Heart left ventricle (tissue), 16 donors: ENCODE measurements at regions of chr11 and their contacts with region 1.

Region 1: DNA sequence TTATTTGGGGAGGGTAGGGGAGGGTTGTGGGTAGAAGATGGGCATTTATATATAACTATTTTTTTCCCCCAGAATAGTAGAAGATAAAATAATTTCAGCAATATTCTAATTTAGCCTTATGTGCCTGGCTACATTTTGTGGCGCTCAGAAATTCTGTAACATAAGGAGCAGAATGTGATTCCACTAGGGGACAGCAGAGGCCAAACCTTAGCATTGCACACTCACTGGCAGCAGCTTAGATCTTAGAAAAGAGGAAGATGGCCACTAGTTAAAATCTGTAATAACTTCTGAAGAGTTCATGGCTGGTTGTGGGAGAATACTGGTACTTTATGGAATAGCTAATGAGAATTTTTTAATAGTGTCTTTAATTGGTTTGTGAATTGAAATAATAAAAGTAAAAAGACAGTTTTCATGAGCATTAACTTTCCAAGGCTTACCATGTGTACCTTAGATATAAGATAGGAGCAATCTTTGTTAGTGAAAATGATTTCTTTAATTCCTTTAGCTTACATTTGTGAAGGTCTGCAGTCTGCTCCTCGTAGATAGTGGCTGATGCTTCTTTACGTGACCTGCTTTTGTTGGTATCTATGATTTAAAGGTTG is 33.1 kb downstream of the DDX10 start:
- DNase-seq: peak in 4 of 5 donors; percentile 39 to 53 (median 46)
- ATAC-seq: peak in 3 of 4 donors; percentile 82 to 88 (median 88)
- H3K4me3 ChIP-seq: no peak overlapping the region
- H3K27ac ChIP-seq: no peak overlapping the region
- H3K4me1 ChIP-seq: peaks cover 0 to 3% (median 0%) of the 10 kb centered on the region in 12 donors
- H3K27me3 ChIP-seq: no peaks in the 10 kb centered on the region
- CTCF ChIP-seq: peak; percentile 75 to 93 (median 86)
- POLR2A ChIP-seq: no peak

Region 2: DNA sequence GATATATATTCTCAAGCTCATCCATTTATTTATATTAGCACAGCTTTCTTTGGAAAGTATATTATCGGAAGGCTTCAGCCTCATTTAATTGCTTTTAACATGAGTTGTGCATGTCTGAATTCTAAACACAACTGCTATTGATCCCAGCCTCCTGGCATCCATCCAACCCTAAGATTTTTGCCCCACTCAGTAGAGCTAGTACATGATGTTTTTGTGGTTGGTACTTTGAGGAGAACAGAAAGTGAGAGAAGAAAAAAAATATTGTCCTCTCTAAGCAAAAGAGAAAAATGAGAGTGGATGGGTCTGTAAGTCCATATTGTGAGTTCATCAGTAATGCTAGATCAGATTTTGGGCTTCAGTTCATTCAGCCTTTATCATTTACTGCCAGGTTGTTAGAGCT is 165.6 kb after region 1 on chr11:
- intact Hi-C with region 1: loop called in 2 of 10 experiments (anchors 5 to 10 kb)
- DNase-seq: no peak
- ATAC-seq: no peak
- H3K4me3 ChIP-seq: no peak overlapping the region
- H3K27ac ChIP-seq: no peak overlapping the region
- H3K4me1 ChIP-seq: no peaks in the 10 kb centered on the region
- H3K27me3 ChIP-seq: no peaks in the 10 kb centered on the region
- CTCF ChIP-seq: no peak
- POLR2A ChIP-seq: no peak

Region 3: GRCh38 chr11:108871152-108871551 is 173.2 kb after region 1 on chr11:
- intact Hi-C with region 1: loop called (anchors 2 to 10 kb)
- DNase-seq: peak in 3 of 5 donors; percentile 20 to 42 (median 25)
- ATAC-seq: peak in 2 of 4 donors; percentile 18 to 63
- H3K4me3 ChIP-seq: no peak overlapping the region
- H3K27ac ChIP-seq: no peak overlapping the region
- H3K4me1 ChIP-seq: peaks cover 0 to 15% (median 2%) of the 10 kb centered on the region in 12 donors
- H3K27me3 ChIP-seq: no peaks in the 10 kb centered on the region
- CTCF ChIP-seq: peak in 11 of 12 donors; percentile 34 to 71 (median 53)
- POLR2A ChIP-seq: no peak

Region 4: DNA sequence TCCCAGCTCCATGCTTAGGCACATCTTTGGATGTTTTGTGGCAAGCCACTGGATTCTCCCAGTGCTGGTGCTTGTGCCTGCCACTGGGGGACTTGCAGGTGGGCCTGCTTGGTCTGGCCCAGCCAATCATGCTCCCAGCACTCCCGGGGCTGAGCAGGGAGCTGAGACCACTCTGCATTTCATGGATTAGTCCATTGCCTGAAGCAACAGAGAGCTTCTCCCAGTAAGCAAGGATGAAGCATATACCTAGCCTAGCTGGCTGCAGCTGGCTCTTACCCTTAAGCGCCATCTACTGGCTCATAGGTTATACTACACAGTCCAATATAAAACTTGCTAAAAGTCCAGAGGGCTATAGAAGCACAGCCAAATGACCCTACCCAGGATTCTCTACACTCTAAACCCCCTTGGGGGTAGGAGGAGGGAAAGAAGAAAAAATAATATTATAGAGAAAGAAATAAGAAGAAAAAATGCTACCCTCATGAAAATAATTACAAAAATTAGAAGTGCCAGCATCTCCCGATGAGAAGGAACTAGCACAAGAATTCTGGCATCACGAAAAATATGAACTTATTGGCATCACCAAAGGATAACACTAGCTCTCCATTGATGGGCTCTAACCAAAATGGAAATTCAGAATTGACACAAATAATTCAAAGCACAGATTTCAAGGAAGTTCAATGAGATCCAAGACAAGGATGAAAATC is 999.3 kb after region 1 on chr11:
- intact Hi-C with region 1: loop called in 6 of 10 experiments (anchors 2 to 10 kb)
- DNase-seq: no peak
- ATAC-seq: peak; percentile 64 to 74 (median 71)
- H3K4me3 ChIP-seq: no peak overlapping the region
- H3K27ac ChIP-seq: no peak overlapping the region
- H3K4me1 ChIP-seq: no peaks in the 10 kb centered on the region
- H3K27me3 ChIP-seq: no peaks in the 10 kb centered on the region
- CTCF ChIP-seq: peak; percentile 27 to 64 (median 53)
- POLR2A ChIP-seq: no peak

Region 5: DNA sequence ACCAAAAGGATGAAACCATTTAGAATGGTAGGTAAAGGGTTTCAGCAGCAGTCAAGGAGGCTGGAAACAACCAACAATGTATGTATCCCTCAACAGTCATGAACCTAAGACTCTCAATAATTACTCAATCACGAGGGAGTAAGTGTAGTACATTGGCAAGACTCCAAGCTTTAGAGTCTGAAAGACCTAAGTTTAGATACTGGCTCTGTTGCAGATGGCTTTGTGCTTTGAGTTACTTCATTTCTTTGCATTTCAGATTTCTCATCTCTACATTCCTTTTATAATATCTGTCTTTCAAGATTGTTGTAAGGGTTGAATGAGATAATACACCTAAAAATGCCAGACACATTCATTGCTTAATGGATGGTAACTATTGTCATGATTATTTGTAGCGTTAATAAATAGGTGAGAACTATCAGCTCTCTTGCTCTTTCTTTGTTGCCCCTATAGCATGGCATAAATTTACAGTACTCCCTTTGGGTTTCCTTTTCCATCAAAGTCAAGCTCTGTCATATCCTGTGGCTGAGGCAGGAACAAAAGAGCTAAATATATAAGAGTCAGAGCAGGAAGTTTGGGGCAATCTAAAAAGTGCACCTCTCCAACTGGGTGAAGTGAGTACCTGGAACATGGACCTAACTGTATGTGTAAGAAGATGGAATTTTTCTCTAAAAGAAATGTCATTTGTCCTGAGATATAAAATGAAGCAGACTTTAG is 1167.0 kb after region 1 on chr11:
- intact Hi-C with region 1: loop called in 7 of 10 experiments (anchors 2 to 10 kb)
- DNase-seq: no peak
- ATAC-seq: peak in 1 of 4 donors; percentile 46
- H3K4me3 ChIP-seq: no peak overlapping the region
- H3K27ac ChIP-seq: no peak overlapping the region
- H3K4me1 ChIP-seq: peaks cover 0 to 6% (median 0%) of the 10 kb centered on the region in 12 donors
- H3K27me3 ChIP-seq: no peaks in the 10 kb centered on the region
- CTCF ChIP-seq: no peak
- POLR2A ChIP-seq: no peak

Region 6: DNA sequence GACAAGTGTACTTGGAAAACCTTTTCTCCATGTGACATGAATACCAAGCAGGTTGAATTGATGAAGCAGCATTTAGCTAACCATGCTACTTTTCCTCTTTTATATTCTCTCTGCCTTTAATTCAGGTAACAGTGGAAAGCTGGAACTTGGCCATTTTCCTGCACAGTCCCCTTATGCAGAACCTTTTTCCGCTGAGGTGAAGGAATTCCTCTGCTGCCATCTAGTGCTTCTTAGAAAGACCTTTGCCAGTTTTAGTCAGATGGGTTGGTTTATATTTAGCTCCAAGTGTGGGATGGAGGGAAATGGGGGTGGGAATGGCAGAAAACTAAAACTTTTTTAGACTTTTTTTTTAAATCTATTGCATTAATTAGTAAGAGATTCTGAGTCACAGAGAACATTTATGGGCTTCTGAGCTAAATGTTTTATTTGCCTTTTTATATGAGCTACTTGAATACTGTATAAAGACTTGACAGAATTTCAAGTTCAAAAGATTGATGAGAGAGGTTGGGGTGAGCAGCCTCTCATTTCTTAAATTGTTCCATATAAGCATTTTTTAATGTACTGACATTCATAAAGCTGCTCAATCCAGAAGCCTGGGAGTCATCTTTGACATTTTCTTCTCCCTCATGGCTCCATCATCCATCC is 1241.3 kb after region 1 on chr11:
- intact Hi-C with region 1: loop called in 8 of 10 experiments (anchors 5 to 10 kb)
- DNase-seq: peak in 2 of 5 donors; percentile 19 to 22
- ATAC-seq: peak in 3 of 4 donors; percentile 69 to 78 (median 74)
- H3K4me3 ChIP-seq: no peak overlapping the region
- H3K27ac ChIP-seq: no peak overlapping the region
- H3K4me1 ChIP-seq: peaks cover 0 to 6% (median 0%) of the 10 kb centered on the region in 12 donors
- H3K27me3 ChIP-seq: no peaks in the 10 kb centered on the region
- CTCF ChIP-seq: peak; percentile 18 to 63 (median 50)
- POLR2A ChIP-seq: no peak